ENCODE measurements at regions of chr6 and their contacts with region 1.

Region 1: DNA sequence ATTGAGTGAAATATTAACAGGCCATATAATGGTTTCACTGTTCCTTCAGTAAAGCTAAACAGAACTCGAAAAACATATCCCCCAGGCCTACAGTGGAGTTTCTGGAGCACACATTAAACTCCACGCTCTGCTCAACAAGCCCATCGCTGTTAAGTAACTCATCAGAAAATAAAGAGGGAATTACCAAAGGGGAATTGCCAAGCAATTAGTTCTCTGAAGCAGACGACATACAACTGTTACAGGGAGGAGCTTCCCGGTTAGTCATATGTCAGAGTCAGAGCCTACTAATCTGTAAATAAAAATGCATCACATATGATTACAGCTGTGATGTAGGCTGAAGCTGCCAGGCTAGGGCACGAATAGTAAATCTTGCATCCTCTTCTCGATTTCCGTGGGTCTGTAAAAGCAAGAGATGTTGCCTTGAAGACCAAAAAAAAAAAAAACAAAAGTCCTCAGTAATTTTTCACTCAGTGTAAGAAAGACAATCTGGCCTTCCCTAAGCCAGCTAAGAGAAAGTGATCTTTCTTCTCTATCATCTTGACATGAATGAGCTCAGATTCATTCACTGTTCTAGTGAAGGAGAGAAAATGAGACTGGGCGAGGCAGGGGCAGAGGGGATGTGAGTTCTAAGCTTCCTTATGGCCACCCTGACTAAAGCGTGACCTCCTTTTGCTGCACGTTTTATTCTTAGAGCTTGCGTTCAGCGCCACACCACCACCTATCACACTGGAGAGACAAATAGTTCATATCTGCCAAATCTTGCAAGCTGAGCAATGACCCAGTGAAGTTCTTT is 13.8 kb downstream of the ATXN1 start:
- DNase-seq: no peak
- CTCF ChIP-seq: no peak

Region 2: GRCh38 chr6:16731478-16732051 is 15.9 kb before region 1 on chr6:
- CTCF ChIA-PET with region 1: interaction called, 10 read pairs
- POLR2A ChIA-PET with region 1: no interaction called
- DNase-seq: peak; percentile 41
- CTCF ChIP-seq: no peak

Region 3: DNA sequence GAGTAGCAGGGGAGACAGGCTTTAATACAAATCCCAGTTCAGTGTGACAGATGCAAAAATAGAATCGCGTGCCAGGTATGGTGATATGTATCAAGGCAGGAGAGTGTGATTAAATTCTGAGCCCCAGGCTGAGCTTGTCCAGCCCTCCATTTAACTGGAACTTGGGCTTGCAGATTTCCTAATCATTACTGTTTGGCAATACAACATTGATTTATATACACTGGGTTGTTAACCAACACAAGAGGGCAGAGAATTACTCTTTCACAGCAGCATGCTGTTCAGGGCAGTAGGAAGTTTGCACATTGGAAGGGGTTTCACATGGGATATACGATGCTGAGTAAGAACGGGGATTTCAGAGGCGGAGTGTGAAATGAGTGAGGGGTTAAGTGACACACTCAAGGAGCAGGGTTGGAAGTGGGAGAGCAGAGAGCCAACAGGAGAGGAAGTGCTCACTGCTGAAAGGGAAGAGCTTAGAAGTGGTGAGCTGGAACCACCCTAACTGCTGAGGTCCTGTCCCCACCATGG is 84.7 kb after region 1 on chr6:
- CTCF ChIA-PET with region 1: no interaction called
- POLR2A ChIA-PET with region 1: no interaction called
- DNase-seq: no peak
- CTCF ChIP-seq: no peak